CD8-positive, alpha-beta T cell (primary cell): ENCODE measurements at regions of chr6 and their contacts with region 1.

Region 1: DNA sequence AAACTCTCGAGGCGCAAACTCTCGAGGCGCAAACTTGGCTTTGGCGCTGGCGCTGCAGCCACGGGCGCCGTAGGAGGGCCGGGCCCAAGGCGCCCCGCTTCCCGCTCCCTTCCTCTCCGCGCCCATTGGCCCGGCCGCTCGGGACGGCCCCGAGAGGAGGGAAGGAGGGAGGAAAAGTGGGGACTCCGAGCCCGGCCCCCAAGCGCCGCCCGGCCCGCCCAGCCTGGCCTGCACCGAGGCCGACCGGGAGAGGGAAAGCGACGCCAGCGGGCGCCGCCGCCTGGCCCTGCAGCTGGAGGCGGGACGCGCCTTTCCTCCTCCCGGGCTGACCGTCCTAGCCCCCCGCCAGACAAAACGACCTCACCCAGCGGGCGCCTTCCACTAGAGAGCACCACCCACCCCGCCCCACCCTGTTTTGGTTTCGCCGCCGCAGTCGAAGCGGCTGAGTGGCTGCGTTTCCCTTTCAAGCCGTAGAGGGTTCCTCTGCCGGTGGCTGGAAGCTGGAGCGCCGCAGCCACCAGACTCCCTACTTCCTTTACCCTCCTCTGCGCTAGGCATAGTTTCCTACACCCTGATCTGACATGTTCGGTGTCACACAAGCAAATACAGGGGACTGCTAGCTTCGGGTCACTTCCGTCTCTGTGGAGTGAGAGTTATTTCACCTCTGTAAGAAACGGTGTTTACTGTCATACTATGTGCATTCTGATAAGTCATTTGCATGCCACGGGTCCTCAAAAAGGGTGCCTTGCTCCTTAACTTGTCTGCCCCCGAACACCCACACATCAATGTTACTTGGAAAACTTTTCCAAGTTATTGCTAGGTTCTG is at the start of gene MBOAT1:
- DNase-seq: peak; percentile 22 to 81 (median 51)
- ATAC-seq: peak; percentile 63
- H3K4me3 ChIP-seq: peak within 1 kb of the TSS; percentile 57 to 62
- H3K4me3 Mint-ChIP-seq: peak within 1 kb of the TSS; percentile 95
- H3K27ac ChIP-seq: peak within 1 kb of the TSS; percentile 19 to 59
- H3K27ac Mint-ChIP-seq: peak within 1 kb of the TSS; percentile 90
- H3K4me1 ChIP-seq: peaks cover 20% of the 10 kb centered on the region
- H3K4me1 Mint-ChIP-seq: peaks cover 30% of the 10 kb centered on the region
- H3K27me3 ChIP-seq: no peaks in the 10 kb centered on the region
- H3K27me3 Mint-ChIP-seq: no peaks in the 10 kb centered on the region
- CTCF ChIP-seq: no peak
- total RNA-seq, gene MBOAT1: 5.9 to 6.5 TPM

Region 2: GRCh38 chr6:20534295-20535262 is 322.0 kb after region 1 on chr6 and contains the start of gene CDKAL1:
- CTCF ChIA-PET with region 1: interaction called, 7 read pairs
- POLR2A ChIA-PET with region 1: no interaction called
- intact Hi-C with region 1: loop called (anchors 2 to 5 kb)
- DNase-seq: peak; percentile 73 to 94 (median 89)
- ATAC-seq: peak; percentile 88
- H3K4me3 ChIP-seq: peak within 1 kb of the TSS; percentile 65 to 74
- H3K4me3 Mint-ChIP-seq: peak within 1 kb of the TSS; percentile 97
- H3K27ac ChIP-seq: peak within 1 kb of the TSS; percentile 71 to 88
- H3K27ac Mint-ChIP-seq: peak within 1 kb of the TSS; percentile 99
- H3K4me1 ChIP-seq: peaks cover 13% of the 10 kb centered on the region
- H3K4me1 Mint-ChIP-seq: peaks cover 46% of the 10 kb centered on the region
- H3K27me3 ChIP-seq: no peaks in the 10 kb centered on the region
- H3K27me3 Mint-ChIP-seq: peaks cover 2% of the 10 kb centered on the region
- CTCF ChIP-seq: no peak
- total RNA-seq, gene CDKAL1: 21.2 to 22.4 TPM